ENCODE measurements at regions of chr11 and their contacts with region 1.

Region 1: DNA sequence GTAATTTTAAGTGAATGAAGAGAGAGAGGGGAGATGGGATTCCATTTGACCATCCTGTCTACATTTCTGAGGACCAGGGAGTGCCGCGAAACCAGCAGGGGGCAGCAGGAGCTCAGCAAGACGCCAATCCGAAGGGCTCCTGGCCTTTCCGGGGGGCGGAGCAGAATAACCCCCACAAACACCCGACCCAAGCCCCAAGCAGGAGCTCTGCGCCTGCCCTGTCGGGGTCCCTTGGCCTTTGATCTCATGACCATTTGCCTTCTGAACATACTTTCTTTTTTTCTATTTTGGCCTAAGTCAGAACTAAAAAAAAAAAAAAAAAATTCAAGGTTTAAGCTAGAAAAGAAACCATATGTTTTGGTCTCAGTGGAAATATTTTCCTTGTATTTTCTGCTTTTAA is 21.9 kb upstream of the SCN2B start:
- DNase-seq: peak; percentile 88
- H3K4me3 Mint-ChIP-seq: no peak overlapping the region
- H3K27ac Mint-ChIP-seq: peak overlapping the region; percentile 69
- H3K4me1 Mint-ChIP-seq: peaks cover 12% of the 10 kb centered on the region
- H3K27me3 Mint-ChIP-seq: no peaks in the 10 kb centered on the region

Region 2: DNA sequence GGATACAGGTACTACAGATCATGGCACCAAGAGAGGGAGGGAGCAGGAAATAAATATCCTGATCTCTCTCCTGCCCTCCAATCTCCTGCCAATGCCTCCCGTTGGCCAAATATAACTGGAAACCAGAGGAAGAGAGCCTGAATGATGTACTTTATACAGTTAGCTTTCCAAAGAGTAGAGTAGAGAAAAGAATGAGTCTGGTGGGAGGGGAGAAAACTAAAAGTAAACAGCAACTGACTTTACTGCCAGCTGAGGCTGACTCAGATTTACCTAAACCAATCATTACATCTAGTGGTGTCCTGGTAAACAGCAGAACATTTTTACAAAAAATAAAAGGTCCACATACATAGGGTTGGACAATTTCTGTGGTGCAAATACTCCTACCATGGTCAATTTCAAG is 48.7 kb after region 1 on chr11:
- CTCF ChIA-PET with region 1: interaction called, 30 read pairs
- intact Hi-C with region 1: loop called (anchors 1 kb)
- DNase-seq: no peak
- H3K4me3 Mint-ChIP-seq: no peak overlapping the region
- H3K27ac Mint-ChIP-seq: peak overlapping the region; percentile 86
- H3K4me1 Mint-ChIP-seq: peaks cover 70% of the 10 kb centered on the region
- H3K27me3 Mint-ChIP-seq: no peaks in the 10 kb centered on the region

Region 3: GRCh38 chr11:118277306-118277705 is 78.9 kb after region 1 on chr11:
- CTCF ChIA-PET with region 1: interaction called, 15 read pairs
- intact Hi-C with region 1: no loop called
- DNase-seq: peak; percentile 55
- H3K4me3 Mint-ChIP-seq: no peak overlapping the region
- H3K27ac Mint-ChIP-seq: no peak overlapping the region
- H3K4me1 Mint-ChIP-seq: peaks cover 52% of the 10 kb centered on the region
- H3K27me3 Mint-ChIP-seq: no peaks in the 10 kb centered on the region

Region 4: GRCh38 chr11:118290923-118291322 is 92.6 kb after region 1 on chr11:
- CTCF ChIA-PET with region 1: interaction called, 42 read pairs
- intact Hi-C with region 1: loop called (anchors 1 kb)
- DNase-seq: peak; percentile 74
- H3K4me3 Mint-ChIP-seq: no peak overlapping the region
- H3K27ac Mint-ChIP-seq: no peak overlapping the region
- H3K4me1 Mint-ChIP-seq: peaks cover 28% of the 10 kb centered on the region
- H3K27me3 Mint-ChIP-seq: no peaks in the 10 kb centered on the region

Region 5: GRCh38 chr11:118311518-118311917 is 113.1 kb after region 1 on chr11:
- CTCF ChIA-PET with region 1: interaction called, 16 read pairs
- intact Hi-C with region 1: no loop called
- DNase-seq: no peak
- H3K4me3 Mint-ChIP-seq: no peak overlapping the region
- H3K27ac Mint-ChIP-seq: peak overlapping the region; percentile 80
- H3K4me1 Mint-ChIP-seq: peaks cover 92% of the 10 kb centered on the region
- H3K27me3 Mint-ChIP-seq: no peaks in the 10 kb centered on the region

Region 6: GRCh38 chr11:118488480-118489109 is 290.2 kb after region 1 on chr11:
- CTCF ChIA-PET with region 1: no interaction called
- intact Hi-C with region 1: loop called (anchors 5 kb)
- DNase-seq: peak; percentile 92
- H3K4me3 Mint-ChIP-seq: no peak overlapping the region
- H3K27ac Mint-ChIP-seq: no peak overlapping the region
- H3K4me1 Mint-ChIP-seq: peaks cover 9% of the 10 kb centered on the region
- H3K27me3 Mint-ChIP-seq: no peaks in the 10 kb centered on the region

Region 7: GRCh38 chr11:118744046-118744445 is 545.7 kb after region 1 on chr11:
- CTCF ChIA-PET with region 1: no interaction called
- intact Hi-C with region 1: no loop called
- DNase-seq: no peak
- H3K4me3 Mint-ChIP-seq: no peak overlapping the region
- H3K27ac Mint-ChIP-seq: no peak overlapping the region
- H3K4me1 Mint-ChIP-seq: no peaks in the 10 kb centered on the region
- H3K27me3 Mint-ChIP-seq: no peaks in the 10 kb centered on the region